CD8-positive, alpha-beta T cell (primary cell): ENCODE measurements at regions of chr20 and their contacts with region 1.

Region 1: DNA sequence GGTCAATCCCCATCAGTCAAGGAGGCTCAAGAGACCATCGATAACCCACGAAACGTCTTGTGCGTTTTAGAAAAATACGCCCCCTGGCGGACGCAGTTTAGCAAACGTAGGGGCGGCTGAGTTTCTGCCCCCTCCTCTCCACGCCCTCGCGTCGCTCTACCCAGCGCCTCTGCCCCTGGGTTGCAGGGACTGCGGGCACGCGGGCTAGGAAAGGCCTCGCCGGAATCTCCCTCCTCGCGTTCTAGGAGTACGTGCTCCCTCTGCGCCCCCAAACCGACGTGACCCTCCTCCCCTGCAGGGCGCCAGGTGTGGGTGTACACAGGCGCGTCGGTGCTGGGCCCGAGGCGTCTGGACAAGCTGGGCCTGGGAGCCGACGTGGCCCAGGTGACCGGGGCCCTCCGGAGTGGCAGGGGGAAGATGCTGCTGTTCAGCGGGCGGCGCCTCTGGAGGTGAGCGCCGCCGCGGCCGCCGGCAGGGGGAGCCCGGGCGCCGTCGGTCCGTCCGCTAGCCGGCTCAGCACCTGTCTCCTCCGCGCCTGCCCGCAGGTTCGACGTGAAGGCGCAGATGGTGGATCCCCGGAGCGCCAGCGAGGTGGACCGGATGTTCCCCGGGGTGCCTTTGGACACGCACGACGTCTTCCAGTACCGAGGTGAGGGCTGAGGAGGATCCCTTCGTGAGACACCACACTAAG is 5.3 kb downstream of the MMP9 start:
- DNase-seq: peak; percentile 44 to 85 (median 73)
- ATAC-seq: peak; percentile 60
- H3K4me3 ChIP-seq: peak overlapping the region; percentile 22 to 34
- H3K4me3 Mint-ChIP-seq: peak overlapping the region; percentile 15
- H3K27ac ChIP-seq: no peak overlapping the region
- H3K27ac Mint-ChIP-seq: no peak overlapping the region
- H3K4me1 ChIP-seq: peaks cover 40% of the 10 kb centered on the region
- H3K4me1 Mint-ChIP-seq: peaks cover 46% of the 10 kb centered on the region
- H3K27me3 ChIP-seq: peaks cover 34 to 44% of the 10 kb centered on the region in 2 experiments
- H3K27me3 Mint-ChIP-seq: peaks cover 76% of the 10 kb centered on the region
- CTCF ChIP-seq: peak; percentile 94

Region 2: GRCh38 chr20:45080867-45081624 is 932.9 kb before region 1 on chr20:
- CTCF ChIA-PET with region 1: no interaction called
- POLR2A ChIA-PET with region 1: no interaction called
- intact Hi-C with region 1: no loop called
- DNase-seq: peak in 1 of 9 experiments; percentile 24
- ATAC-seq: peak; percentile 45
- H3K4me3 ChIP-seq: no peak overlapping the region
- H3K4me3 Mint-ChIP-seq: no peak overlapping the region
- H3K27ac ChIP-seq: no peak overlapping the region
- H3K27ac Mint-ChIP-seq: no peak overlapping the region
- H3K4me1 ChIP-seq: no peaks in the 10 kb centered on the region
- H3K4me1 Mint-ChIP-seq: peaks cover 7% of the 10 kb centered on the region
- H3K27me3 ChIP-seq: no peaks in the 10 kb centered on the region
- H3K27me3 Mint-ChIP-seq: no peaks in the 10 kb centered on the region
- CTCF ChIP-seq: peak; percentile 18

Region 3: GRCh38 chr20:45833030-45833882 is 180.7 kb before region 1 on chr20 and contains the start of gene SNX21:
- CTCF ChIA-PET with region 1: no interaction called
- POLR2A ChIA-PET with region 1: no interaction called
- intact Hi-C with region 1: no loop called
- DNase-seq: peak in 7 of 9 experiments; percentile 6 to 61 (median 26)
- ATAC-seq: peak; percentile 73
- H3K4me3 ChIP-seq: peak within 1 kb of the TSS; percentile 64 to 73
- H3K4me3 Mint-ChIP-seq: peak within 1 kb of the TSS; percentile 86
- H3K27ac ChIP-seq: no peak within 1 kb of the TSS
- H3K27ac Mint-ChIP-seq: no peak within 1 kb of the TSS
- H3K4me1 ChIP-seq: peaks cover 7% of the 10 kb centered on the region
- H3K4me1 Mint-ChIP-seq: peaks cover 17% of the 10 kb centered on the region
- H3K27me3 ChIP-seq: no peaks in the 10 kb centered on the region
- H3K27me3 Mint-ChIP-seq: no peaks in the 10 kb centered on the region
- CTCF ChIP-seq: no peak
- total RNA-seq, gene SNX21: 0.46 to 0.50 TPM

Region 4: DNA sequence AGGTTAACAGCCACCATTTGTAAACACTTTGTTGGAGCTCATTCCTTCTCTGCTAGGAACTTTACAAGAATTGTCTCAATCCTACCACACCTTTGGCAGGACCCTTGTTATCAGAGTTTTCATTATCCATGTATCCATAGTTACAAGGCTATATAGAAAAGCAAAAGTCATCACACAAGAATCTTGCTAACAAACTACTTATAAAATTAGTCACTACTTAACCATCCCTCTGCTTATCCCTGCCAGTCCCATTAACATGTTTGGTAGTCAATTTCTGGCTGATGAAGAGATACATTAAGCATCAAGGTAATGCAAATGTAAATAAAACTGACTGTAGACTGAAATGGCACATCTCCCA is 146.2 kb before region 1 on chr20:
- CTCF ChIA-PET with region 1: no interaction called
- POLR2A ChIA-PET with region 1: no interaction called
- intact Hi-C with region 1: no loop called
- DNase-seq: no peak
- ATAC-seq: no peak
- H3K4me3 ChIP-seq: no peak overlapping the region
- H3K4me3 Mint-ChIP-seq: no peak overlapping the region
- H3K27ac ChIP-seq: no peak overlapping the region
- H3K27ac Mint-ChIP-seq: no peak overlapping the region
- H3K4me1 ChIP-seq: no peaks in the 10 kb centered on the region
- H3K4me1 Mint-ChIP-seq: no peaks in the 10 kb centered on the region
- H3K27me3 ChIP-seq: no peaks in the 10 kb centered on the region
- H3K27me3 Mint-ChIP-seq: no peaks in the 10 kb centered on the region
- CTCF ChIP-seq: no peak

Region 5: DNA sequence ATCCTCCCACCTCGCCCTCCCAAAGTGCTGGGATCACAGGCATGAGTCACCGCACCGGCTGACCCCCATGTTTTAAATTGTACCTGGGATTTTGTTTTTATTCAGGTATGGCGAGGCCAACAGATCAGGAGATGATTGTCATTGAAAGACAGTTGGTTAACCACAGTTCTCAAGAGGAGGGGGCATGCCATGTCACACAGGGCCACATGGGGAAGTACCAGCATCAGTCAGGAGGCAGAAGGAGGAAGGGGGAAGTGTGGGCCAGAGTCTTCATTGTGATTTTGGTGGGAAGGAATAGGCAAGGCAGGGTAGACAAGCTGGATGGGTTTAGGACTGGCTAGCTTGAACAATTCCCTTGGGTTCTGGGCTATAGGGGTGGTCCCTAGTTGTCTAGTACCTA is 15.2 kb before region 1 on chr20:
- CTCF ChIA-PET with region 1: interaction called, 42 read pairs
- POLR2A ChIA-PET with region 1: interaction called, 3 read pairs
- intact Hi-C with region 1: no loop called
- DNase-seq: peak in 3 of 9 experiments; percentile 22 to 62 (median 34)
- ATAC-seq: peak; percentile 77
- H3K4me3 ChIP-seq: no peak overlapping the region
- H3K4me3 Mint-ChIP-seq: no peak overlapping the region
- H3K27ac ChIP-seq: no peak overlapping the region
- H3K27ac Mint-ChIP-seq: peak overlapping the region; percentile 24
- H3K4me1 ChIP-seq: peaks cover 55% of the 10 kb centered on the region
- H3K4me1 Mint-ChIP-seq: peaks cover 56% of the 10 kb centered on the region
- H3K27me3 ChIP-seq: no peaks in the 10 kb centered on the region
- H3K27me3 Mint-ChIP-seq: peaks cover 8% of the 10 kb centered on the region
- CTCF ChIP-seq: no peak

Region 6: GRCh38 chr20:46132705-46133120 is 118.7 kb after region 1 on chr20:
- CTCF ChIA-PET with region 1: no interaction called
- POLR2A ChIA-PET with region 1: no interaction called
- intact Hi-C with region 1: no loop called
- DNase-seq: peak in 8 of 9 experiments; percentile 35 to 72 (median 61)
- ATAC-seq: peak; percentile 73
- H3K4me3 ChIP-seq: no peak overlapping the region
- H3K4me3 Mint-ChIP-seq: no peak overlapping the region
- H3K27ac ChIP-seq: no peak overlapping the region
- H3K27ac Mint-ChIP-seq: no peak overlapping the region
- H3K4me1 ChIP-seq: no peaks in the 10 kb centered on the region
- H3K4me1 Mint-ChIP-seq: no peaks in the 10 kb centered on the region
- H3K27me3 ChIP-seq: no peaks in the 10 kb centered on the region
- H3K27me3 Mint-ChIP-seq: peaks cover 50% of the 10 kb centered on the region
- CTCF ChIP-seq: peak; percentile 67

Region 7: GRCh38 chr20:46174469-46175128 is 160.6 kb after region 1 on chr20:
- CTCF ChIA-PET with region 1: interaction called, 38 read pairs
- POLR2A ChIA-PET with region 1: no interaction called
- intact Hi-C with region 1: loop called (anchors 2 kb)
- DNase-seq: peak; percentile 42 to 78 (median 72)
- ATAC-seq: peak; percentile 91
- H3K4me3 ChIP-seq: no peak overlapping the region
- H3K4me3 Mint-ChIP-seq: no peak overlapping the region
- H3K27ac ChIP-seq: no peak overlapping the region
- H3K27ac Mint-ChIP-seq: no peak overlapping the region
- H3K4me1 ChIP-seq: no peaks in the 10 kb centered on the region
- H3K4me1 Mint-ChIP-seq: peaks cover 4% of the 10 kb centered on the region
- H3K27me3 ChIP-seq: peaks cover 7 to 16% of the 10 kb centered on the region in 2 experiments
- H3K27me3 Mint-ChIP-seq: peaks cover 64% of the 10 kb centered on the region
- CTCF ChIP-seq: peak; percentile 57